ENCODE measurements at regions of chr13 and their contacts with region 1.

Region 1: DNA sequence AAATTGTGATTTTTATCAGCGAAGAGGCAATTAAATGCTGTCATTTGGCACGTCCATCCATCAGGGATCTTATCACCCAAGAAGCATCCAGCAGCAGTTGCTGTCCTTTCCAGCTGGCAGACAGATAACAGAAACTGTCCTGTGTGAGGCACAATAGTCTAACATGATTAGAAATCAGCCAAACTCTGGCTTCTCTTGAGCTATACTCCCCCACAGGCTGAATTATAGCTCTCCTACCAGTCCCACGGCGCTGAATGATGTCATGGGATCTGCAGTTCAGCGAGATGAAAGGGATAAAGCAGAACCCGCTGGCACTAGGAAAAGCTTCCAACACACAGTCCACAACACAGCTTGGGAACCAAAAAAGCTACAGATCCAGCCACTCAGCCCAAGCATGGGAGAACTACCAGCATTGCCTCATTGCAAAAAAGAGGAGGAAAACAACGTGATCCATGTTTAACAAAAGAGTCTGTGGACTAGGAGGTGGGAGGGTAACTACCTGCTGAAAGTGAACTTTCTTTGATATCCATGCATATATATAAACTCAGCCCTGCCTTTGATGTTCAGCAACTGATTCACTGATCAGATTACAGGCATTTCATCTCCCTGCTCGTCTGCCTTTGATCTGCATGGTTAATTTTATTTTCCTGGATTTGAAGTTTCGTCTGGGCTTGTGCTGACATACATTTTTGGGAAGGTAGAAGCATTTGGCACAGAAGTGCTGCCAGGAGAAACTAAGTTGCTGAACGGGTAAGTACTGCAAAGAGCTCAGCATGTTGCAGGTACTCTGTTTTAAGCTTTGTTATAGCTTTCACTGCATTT is at the start of gene TNFRSF19:
- DNase-seq: peak; percentile 64
- H3K4me3 ChIP-seq: peak within 1 kb of the TSS; percentile 63
- CTCF ChIP-seq: no peak

Region 2: GRCh38 chr13:23558675-23559536 is 11.4 kb before region 1 on chr13:
- CTCF ChIA-PET with region 1: interaction called, 16 read pairs
- POLR2A ChIA-PET with region 1: no interaction called
- DNase-seq: peak; percentile 75
- H3K4me3 ChIP-seq: peak overlapping the region; percentile 42
- CTCF ChIP-seq: no peak

Region 3: GRCh38 chr13:23621316-23621645 is 51.0 kb after region 1 on chr13:
- CTCF ChIA-PET with region 1: no interaction called
- POLR2A ChIA-PET with region 1: no interaction called
- DNase-seq: peak; percentile 67
- H3K4me3 ChIP-seq: no peak overlapping the region
- CTCF ChIP-seq: no peak